ENCODE measurements at regions of chr1 and their contacts with region 1.

Region 1: DNA sequence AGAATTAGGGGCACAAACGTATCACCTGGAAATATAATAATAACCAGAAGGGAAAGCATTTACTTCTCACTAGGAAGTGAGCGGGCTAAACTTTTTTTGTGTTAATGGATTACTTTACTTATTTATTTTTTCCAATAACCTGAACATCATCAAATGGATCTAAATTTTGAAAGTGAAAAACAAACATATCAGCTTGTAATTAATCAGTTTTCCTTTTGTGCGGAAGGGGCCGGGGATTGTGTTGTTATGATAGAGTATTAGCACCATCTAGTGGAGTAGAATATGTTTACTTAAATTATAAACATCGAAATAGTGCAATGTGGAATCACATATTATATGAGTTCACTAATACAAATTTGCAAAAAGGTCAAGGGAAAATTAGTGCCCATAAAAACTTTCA is 9.0 kb downstream of the CFH start:
- DNase-seq: no peak
- ATAC-seq: peak; percentile 56; the same call in 2 of the 3 replicates
- H3K4me3 ChIP-seq: no peak overlapping the region
- H3K27ac ChIP-seq: no peak overlapping the region
- H3K4me1 ChIP-seq: no peaks in the 10 kb centered on the region
- H3K27me3 ChIP-seq: no peaks in the 10 kb centered on the region
- CTCF ChIP-seq: peak; percentile 64
- EP300 ChIP-seq: no peak
- POLR2A ChIP-seq: no peak
- RAD21 ChIP-seq: peak; percentile 43; the same call in 1 of the 2 replicates

Region 2: DNA sequence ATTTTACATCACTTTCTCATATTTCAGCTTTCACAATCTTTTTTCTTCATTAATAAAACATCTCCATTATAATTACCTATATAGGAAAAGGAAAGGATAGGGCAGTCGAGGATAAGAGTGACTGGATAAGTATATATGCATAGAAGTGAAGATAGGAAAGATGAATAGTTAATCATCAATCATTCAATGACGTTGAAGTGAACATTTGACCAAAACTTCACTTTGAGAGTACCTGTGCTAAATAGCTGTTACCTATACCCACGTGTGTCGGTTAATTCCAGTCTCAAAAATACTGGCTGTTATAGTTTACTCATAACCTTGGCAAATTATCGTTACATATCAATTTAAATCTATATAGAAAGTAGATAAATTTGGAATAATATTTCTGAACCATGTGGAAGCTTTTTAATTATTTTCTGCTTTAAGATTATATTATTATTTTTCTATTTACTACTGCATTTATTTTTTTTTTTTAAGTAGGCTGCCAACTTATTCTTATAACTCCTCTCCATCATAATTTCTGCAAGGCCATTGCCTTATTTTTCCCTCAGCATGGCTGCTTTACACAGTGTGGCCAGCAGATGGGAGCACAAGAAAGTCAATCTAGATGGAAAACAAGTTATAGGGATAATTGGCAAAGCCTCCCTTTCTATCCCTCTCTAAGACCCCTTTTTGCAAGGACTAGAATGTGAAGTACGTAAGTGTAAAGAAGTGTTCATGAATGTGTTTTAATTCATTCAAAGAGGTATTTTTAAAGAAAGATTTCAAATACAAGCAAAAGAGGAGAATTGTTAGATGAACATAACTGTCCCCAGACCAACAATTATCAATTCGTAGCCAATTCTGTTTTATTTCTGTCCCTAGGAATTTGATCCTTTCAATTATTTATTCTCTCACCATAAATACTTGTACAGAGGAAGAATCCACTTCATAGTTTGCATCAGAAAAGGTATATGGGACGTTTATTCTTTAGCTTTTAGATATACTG is 343.0 kb before region 1 on chr1:
- CTCF ChIA-PET with region 1: interaction called, 26 read pairs
- POLR2A ChIA-PET with region 1: no interaction called
- in situ Hi-C with region 1: loop called (anchors 10 kb)
- intact Hi-C with region 1: loop called (anchors 1 kb)
- DNase-seq: peak; percentile 21
- ATAC-seq: peak; percentile 63
- H3K4me3 ChIP-seq: no peak overlapping the region
- H3K27ac ChIP-seq: no peak overlapping the region
- H3K4me1 ChIP-seq: no peaks in the 10 kb centered on the region
- H3K27me3 ChIP-seq: no peaks in the 10 kb centered on the region
- CTCF ChIP-seq: peak; percentile 68
- EP300 ChIP-seq: no peak
- POLR2A ChIP-seq: no peak
- RAD21 ChIP-seq: no peak

Region 3: DNA sequence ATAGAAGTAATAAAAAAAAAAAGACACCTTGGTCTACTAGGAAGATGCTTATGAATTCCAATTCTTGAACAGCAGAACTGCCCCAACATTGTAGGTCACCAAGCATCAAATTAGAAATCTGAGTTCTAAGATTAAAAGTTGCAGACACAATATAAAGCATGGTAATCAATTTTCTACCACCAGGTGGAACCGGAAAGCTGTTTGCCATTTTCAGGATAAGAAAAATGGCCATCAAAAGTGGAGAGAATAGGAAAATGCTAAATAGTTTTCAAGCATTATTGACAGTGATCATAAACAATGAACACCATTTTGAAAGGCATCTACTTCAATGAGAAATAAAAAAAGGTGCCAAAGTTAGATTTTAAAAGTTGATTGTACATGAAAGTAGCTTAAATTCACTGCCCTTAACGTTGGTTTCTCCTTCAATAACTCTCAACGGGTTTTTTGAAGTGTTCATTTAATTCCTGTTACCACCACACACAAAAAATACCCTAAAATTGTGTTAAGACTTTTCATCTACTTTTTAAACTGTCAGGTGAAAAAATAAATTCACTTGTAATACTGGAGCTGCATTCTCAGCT is 305.6 kb before region 1 on chr1:
- CTCF ChIA-PET with region 1: interaction called, 13 read pairs
- POLR2A ChIA-PET with region 1: no interaction called
- in situ Hi-C with region 1: no loop called
- intact Hi-C with region 1: loop called (anchors 1 kb)
- DNase-seq: peak; percentile 3
- ATAC-seq: no peak
- H3K4me3 ChIP-seq: no peak overlapping the region
- H3K27ac ChIP-seq: no peak overlapping the region
- H3K4me1 ChIP-seq: no peaks in the 10 kb centered on the region
- H3K27me3 ChIP-seq: no peaks in the 10 kb centered on the region
- CTCF ChIP-seq: peak; percentile 59
- EP300 ChIP-seq: no peak
- POLR2A ChIP-seq: no peak
- RAD21 ChIP-seq: 0 out of 2 replicates have a peak, but pooled peaks have one; percentile 40

Region 4: GRCh38 chr1:196678510-196678884 is 17.6 kb after region 1 on chr1:
- CTCF ChIA-PET with region 1: no interaction called
- POLR2A ChIA-PET with region 1: no interaction called
- in situ Hi-C with region 1: no loop called
- intact Hi-C with region 1: no loop called
- DNase-seq: no peak
- ATAC-seq: no peak
- H3K4me3 ChIP-seq: no peak overlapping the region
- H3K27ac ChIP-seq: no peak overlapping the region
- H3K4me1 ChIP-seq: no peaks in the 10 kb centered on the region
- H3K27me3 ChIP-seq: no peaks in the 10 kb centered on the region
- CTCF ChIP-seq: no peak
- EP300 ChIP-seq: no peak
- POLR2A ChIP-seq: no peak
- RAD21 ChIP-seq: no peak